ENCODE measurements at regions of chr2 and their contacts with region 1.

Region 1: GRCh38 chr2:146124741-146125140 is 1604.8 kb upstream of the ZEB2 start:
- DNase-seq: no peak
- ATAC-seq: peak; percentile 30; the same call in 2 of the 3 replicates
- H3K4me3 ChIP-seq: no peak overlapping the region
- H3K27ac ChIP-seq: no peak overlapping the region
- H3K4me1 ChIP-seq: no peaks in the 10 kb centered on the region
- H3K27me3 ChIP-seq: no peaks in the 10 kb centered on the region
- CTCF ChIP-seq: no peak
- EP300 ChIP-seq: no peak
- POLR2A ChIP-seq: no peak
- RAD21 ChIP-seq: no peak

Region 2: GRCh38 chr2:146041274-146041910 is 83.3 kb before region 1 on chr2:
- CTCF ChIA-PET with region 1: no interaction called
- POLR2A ChIA-PET with region 1: no interaction called
- RAD21 ChIA-PET with region 1: no interaction called
- SMC1A ChIA-PET with region 1: no interaction called
- in situ Hi-C with region 1: no loop called
- intact Hi-C with region 1: no loop called
- DNase-seq: no peak
- ATAC-seq: no peak
- H3K4me3 ChIP-seq: no peak overlapping the region
- H3K27ac ChIP-seq: no peak overlapping the region
- H3K4me1 ChIP-seq: no peaks in the 10 kb centered on the region
- H3K27me3 ChIP-seq: no peaks in the 10 kb centered on the region
- CTCF ChIP-seq: no peak
- EP300 ChIP-seq: no peak
- POLR2A ChIP-seq: no peak
- RAD21 ChIP-seq: no peak

Region 3: GRCh38 chr2:146094185-146094584 is 30.6 kb before region 1 on chr2:
- CTCF ChIA-PET with region 1: no interaction called
- POLR2A ChIA-PET with region 1: no interaction called
- RAD21 ChIA-PET with region 1: no interaction called
- SMC1A ChIA-PET with region 1: no interaction called
- in situ Hi-C with region 1: no loop called
- intact Hi-C with region 1: loop called (anchors 2 kb)
- DNase-seq: no peak
- ATAC-seq: no peak
- H3K4me3 ChIP-seq: no peak overlapping the region
- H3K27ac ChIP-seq: no peak overlapping the region
- H3K4me1 ChIP-seq: no peaks in the 10 kb centered on the region
- H3K27me3 ChIP-seq: no peaks in the 10 kb centered on the region
- CTCF ChIP-seq: no peak
- EP300 ChIP-seq: no peak
- POLR2A ChIP-seq: no peak
- RAD21 ChIP-seq: no peak

Region 4: GRCh38 chr2:146388757-146389156 is 264.0 kb after region 1 on chr2:
- CTCF ChIA-PET with region 1: no interaction called
- POLR2A ChIA-PET with region 1: no interaction called
- RAD21 ChIA-PET with region 1: no interaction called
- SMC1A ChIA-PET with region 1: no interaction called
- in situ Hi-C with region 1: no loop called
- intact Hi-C with region 1: no loop called
- DNase-seq: no peak
- ATAC-seq: no peak
- H3K4me3 ChIP-seq: no peak overlapping the region
- H3K27ac ChIP-seq: no peak overlapping the region
- H3K4me1 ChIP-seq: no peaks in the 10 kb centered on the region
- H3K27me3 ChIP-seq: no peaks in the 10 kb centered on the region
- CTCF ChIP-seq: no peak
- EP300 ChIP-seq: no peak
- POLR2A ChIP-seq: no peak
- RAD21 ChIP-seq: no peak